GM18951 (cell line): ENCODE measurements at regions of chr2 and their contacts with region 1.

Region 1: GRCh38 chr2:192162392-192163042 is 32.2 kb downstream of the TMEFF2 start:
- POLR2A ChIP-seq: no peak

Region 2: DNA sequence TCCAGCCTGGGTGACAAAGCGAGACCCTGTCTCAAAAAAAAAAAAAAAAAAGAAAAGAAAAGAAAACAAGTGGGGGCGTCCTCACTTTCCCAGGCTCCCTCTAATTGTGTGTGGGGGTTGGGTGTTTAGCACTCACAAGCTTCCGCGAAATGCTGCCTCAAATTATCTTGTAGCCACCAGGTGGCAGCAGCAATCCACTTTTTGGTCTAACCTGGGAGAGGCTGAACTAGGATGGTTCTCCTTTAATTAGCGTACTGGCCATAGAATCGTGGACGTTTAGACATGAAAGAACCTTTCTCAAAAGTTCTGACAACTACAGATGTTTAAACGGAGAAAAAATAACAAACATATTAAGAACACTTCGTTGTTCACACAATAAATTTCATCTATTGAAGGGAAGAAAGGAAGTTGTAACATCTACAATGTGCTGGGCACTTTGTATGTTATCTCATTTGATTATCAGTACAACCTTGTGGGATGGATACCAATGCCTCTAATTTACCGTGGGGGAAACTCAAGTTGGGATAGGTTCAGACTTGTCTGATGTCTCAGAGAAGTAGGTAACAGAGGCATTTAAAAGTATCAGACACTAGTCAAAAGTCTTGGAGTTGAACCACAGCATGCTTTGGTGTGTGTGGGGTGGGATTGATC is 607.3 kb before region 1 on chr2:
- in situ Hi-C with region 1: loop called (anchors 10 kb)
- POLR2A ChIP-seq: no peak

Region 3: GRCh38 chr2:191811807-191812602 is 350.5 kb before region 1 on chr2:
- in situ Hi-C with region 1: loop called (anchors 10 kb)
- POLR2A ChIP-seq: no peak

Region 4: GRCh38 chr2:192016265-192016664 is 146.3 kb before region 1 on chr2:
- in situ Hi-C with region 1: no loop called
- POLR2A ChIP-seq: no peak